Esophagus muscularis mucosa (tissue), 4 donors: ENCODE measurements at regions of chr3 and their contacts with region 1.

Region 1: GRCh38 chr3:72487078-72487765 is 361.0 kb downstream of the SHQ1 start:
- DNase-seq: peak; percentile 93
- H3K4me3 ChIP-seq: no peak overlapping the region
- H3K27ac ChIP-seq: peak overlapping the region in 3 of 4 donors; percentile 13 to 39 (median 28)
- H3K4me1 ChIP-seq: peaks cover 27 to 48% (median 41%) of the 10 kb centered on the region in 4 donors
- H3K27me3 ChIP-seq: no peaks in the 10 kb centered on the region
- CTCF ChIP-seq: no peak
- EP300 ChIP-seq: no peak
- POLR2A ChIP-seq: no peak

Region 2: GRCh38 chr3:72447059-72447946 is 39.9 kb before region 1 on chr3:
- intact Hi-C with region 1: loop called (anchors 2 kb)
- DNase-seq: peak; percentile 95
- H3K4me3 ChIP-seq: peak overlapping the region; percentile 67 to 91 (median 77)
- H3K27ac ChIP-seq: peak overlapping the region; percentile 87 to 95 (median 88)
- H3K4me1 ChIP-seq: peaks cover 20 to 38% (median 36%) of the 10 kb centered on the region in 4 donors
- H3K27me3 ChIP-seq: no peaks in the 10 kb centered on the region
- CTCF ChIP-seq: no peak
- EP300 ChIP-seq: no peak
- POLR2A ChIP-seq: no peak